Activated CD8-positive, alpha-beta memory T cell treated with anti-CD3 and anti-CD28 coated beads, Interleukin-2, amount 10 ng/mL, durations not matched to agents 7 days and 5 days (primary cell): ENCODE measurements at regions of chr1 and their contacts with region 1.

Region 1: GRCh38 chr1:36187800-36188593 is 32.0 kb downstream of the MAP7D1 start:
- DNase-seq: peak; percentile 89
- ATAC-seq: peak; percentile 97
- H3K4me3 Mint-ChIP-seq: no peak overlapping the region
- H3K27ac Mint-ChIP-seq: peak overlapping the region; percentile 37
- H3K4me1 Mint-ChIP-seq: peaks cover 4% of the 10 kb centered on the region
- H3K27me3 Mint-ChIP-seq: no peaks in the 10 kb centered on the region

Region 2: DNA sequence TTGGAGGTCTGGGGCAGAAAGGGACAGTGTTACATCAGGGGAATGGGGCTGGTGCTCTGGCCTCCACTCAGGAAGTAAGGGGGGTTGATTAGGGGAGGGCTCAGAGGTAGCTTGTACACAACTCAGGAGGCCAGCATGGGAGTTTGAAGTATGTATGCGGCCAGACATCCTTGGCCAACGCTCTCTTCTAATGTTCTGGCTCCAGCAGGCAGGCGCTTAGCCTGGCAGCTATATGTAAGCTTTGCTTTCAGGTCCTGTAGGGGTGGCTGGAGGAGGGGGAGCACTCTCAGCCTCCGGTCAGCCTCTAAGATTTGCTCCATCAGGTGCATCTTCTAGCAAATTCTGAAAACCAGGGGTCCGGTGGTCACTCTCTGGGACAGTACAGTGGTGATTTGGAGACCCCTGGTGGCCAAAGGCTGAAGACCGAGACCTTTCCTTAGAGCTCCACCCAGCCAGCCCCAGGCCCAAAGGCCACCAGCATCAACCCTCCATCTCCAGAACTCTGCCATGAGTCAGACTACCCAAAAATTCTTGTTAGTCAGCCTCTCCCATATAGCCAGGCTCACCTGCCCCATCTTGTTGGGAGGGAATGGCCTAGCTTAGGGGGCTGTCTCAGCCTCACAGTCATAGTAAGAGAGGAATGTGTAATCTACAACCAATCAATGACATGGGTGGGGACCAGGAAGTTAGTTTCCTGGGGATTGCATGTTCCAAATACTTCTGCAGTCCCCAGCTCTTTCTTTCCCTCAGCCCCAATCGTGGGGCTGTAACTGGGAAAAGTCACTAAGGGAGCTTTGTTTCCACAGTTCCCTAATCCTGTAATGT is 53.3 kb before region 1 on chr1:
- CTCF ChIA-PET with region 1: interaction called, 22 read pairs
- DNase-seq: peak; percentile 63
- ATAC-seq: peak; percentile 80
- H3K4me3 Mint-ChIP-seq: no peak overlapping the region
- H3K27ac Mint-ChIP-seq: no peak overlapping the region
- H3K4me1 Mint-ChIP-seq: peaks cover 7% of the 10 kb centered on the region
- H3K27me3 Mint-ChIP-seq: no peaks in the 10 kb centered on the region

Region 3: GRCh38 chr1:36160949-36161485 is 27.0 kb before region 1 on chr1:
- CTCF ChIA-PET with region 1: interaction called, 30 read pairs
- DNase-seq: peak; percentile 89
- ATAC-seq: peak; percentile 52
- H3K4me3 Mint-ChIP-seq: peak overlapping the region; percentile 82
- H3K27ac Mint-ChIP-seq: peak overlapping the region; percentile 94
- H3K4me1 Mint-ChIP-seq: peaks cover 65% of the 10 kb centered on the region
- H3K27me3 Mint-ChIP-seq: no peaks in the 10 kb centered on the region

Region 4: GRCh38 chr1:36198641-36199040 is 10.6 kb after region 1 on chr1:
- CTCF ChIA-PET with region 1: interaction called, 10 read pairs
- DNase-seq: no peak
- ATAC-seq: no peak
- H3K4me3 Mint-ChIP-seq: no peak overlapping the region
- H3K27ac Mint-ChIP-seq: no peak overlapping the region
- H3K4me1 Mint-ChIP-seq: no peaks in the 10 kb centered on the region
- H3K27me3 Mint-ChIP-seq: peaks cover 7% of the 10 kb centered on the region

Region 5: DNA sequence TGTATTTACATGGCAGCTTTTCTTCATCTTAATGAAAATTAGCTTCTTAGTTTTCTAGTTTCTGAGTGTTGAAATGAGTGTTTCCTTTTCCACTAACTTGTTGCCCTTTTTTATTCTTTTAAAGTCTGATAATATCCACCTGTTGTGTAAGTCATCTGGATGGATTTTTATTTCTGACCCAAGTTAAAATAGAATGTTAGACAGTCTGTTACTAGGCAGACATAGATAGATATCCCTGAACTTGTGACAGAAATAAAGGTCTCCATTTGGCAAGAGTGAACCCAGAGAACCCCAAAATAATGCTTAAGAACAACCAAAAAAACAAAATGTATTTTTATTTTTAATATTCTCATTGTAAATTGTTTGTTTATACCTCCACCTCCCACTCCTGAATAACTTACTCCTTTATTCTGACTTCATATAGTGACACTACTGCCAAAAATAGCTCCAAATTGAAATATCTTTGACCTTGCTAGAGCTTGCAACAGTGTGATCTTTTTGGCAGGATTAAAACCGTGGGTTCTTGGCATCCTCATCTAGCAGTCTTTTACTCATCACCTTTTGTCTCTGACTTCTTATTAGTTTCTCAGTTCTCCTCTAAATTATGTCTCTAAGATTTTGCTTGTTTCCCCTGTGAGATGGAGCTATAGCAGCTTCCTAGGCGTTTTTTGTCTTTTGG is 91.3 kb after region 1 on chr1:
- CTCF ChIA-PET with region 1: interaction called, 15 read pairs
- DNase-seq: no peak
- ATAC-seq: no peak
- H3K4me3 Mint-ChIP-seq: no peak overlapping the region
- H3K27ac Mint-ChIP-seq: no peak overlapping the region
- H3K4me1 Mint-ChIP-seq: peaks cover 14% of the 10 kb centered on the region
- H3K27me3 Mint-ChIP-seq: no peaks in the 10 kb centered on the region

Region 6: GRCh38 chr1:36609241-36610027 is 421.4 kb after region 1 on chr1:
- CTCF ChIA-PET with region 1: no interaction called
- DNase-seq: peak; percentile 64
- ATAC-seq: peak; percentile 75
- H3K4me3 Mint-ChIP-seq: no peak overlapping the region
- H3K27ac Mint-ChIP-seq: no peak overlapping the region
- H3K4me1 Mint-ChIP-seq: peaks cover 10% of the 10 kb centered on the region
- H3K27me3 Mint-ChIP-seq: no peaks in the 10 kb centered on the region